Lower lobe of right lung (tissue), 2 donors: ENCODE measurements at regions of chr17 and their contacts with region 1.

Region 1: DNA sequence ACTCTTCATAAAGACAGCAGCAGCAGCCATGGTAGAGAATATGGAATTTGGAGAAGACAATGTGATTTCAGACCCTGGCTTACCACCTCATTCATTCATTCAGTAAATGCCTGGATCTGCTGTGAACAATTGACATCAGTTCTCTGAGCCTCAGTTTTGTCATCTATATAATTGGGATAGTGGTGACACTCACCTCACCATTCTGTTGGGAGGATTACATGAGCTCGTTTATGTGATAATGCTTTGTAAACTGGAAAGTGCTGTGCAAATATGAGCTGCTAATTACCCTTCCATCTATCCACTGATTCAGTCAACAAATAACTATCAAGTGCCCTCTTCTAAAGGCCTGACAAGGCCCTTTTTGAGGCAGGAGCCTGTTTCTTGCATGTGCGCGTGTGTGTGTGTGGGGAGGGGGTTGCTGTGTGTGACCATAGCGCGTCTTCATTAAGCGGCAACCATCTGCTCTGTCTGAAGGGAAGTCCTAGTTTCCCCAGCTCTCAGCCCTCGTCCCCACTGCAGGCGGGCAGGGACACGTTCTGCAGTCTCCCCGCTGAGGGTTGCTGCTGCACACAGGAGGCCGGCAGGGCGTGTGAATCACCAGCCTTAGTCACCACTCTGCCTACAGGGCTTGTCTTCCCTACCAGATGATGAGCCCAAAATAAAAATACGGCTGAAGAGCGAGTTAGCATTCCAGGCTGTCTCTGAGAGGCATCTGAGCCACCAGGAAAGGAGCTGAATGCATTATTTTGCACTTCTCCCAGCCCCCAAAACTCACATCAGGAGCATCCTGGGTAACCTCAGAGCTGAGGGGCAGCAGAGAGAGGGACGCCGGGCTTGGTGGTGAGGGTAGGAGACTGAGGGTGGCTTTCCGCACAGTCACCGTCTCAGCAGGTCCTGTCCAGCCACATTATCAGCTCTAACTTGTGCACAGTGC is 19.9 kb downstream of the ARL4D start:
- DNase-seq: no peak
- ATAC-seq: peak; percentile 33 to 50
- H3K4me3 ChIP-seq: no peak overlapping the region
- H3K27ac ChIP-seq: peak overlapping the region; percentile 62
- H3K4me1 ChIP-seq: peaks cover 28% of the 10 kb centered on the region
- H3K27me3 ChIP-seq: no peaks in the 10 kb centered on the region
- CTCF ChIP-seq: no peak

Region 2: DNA sequence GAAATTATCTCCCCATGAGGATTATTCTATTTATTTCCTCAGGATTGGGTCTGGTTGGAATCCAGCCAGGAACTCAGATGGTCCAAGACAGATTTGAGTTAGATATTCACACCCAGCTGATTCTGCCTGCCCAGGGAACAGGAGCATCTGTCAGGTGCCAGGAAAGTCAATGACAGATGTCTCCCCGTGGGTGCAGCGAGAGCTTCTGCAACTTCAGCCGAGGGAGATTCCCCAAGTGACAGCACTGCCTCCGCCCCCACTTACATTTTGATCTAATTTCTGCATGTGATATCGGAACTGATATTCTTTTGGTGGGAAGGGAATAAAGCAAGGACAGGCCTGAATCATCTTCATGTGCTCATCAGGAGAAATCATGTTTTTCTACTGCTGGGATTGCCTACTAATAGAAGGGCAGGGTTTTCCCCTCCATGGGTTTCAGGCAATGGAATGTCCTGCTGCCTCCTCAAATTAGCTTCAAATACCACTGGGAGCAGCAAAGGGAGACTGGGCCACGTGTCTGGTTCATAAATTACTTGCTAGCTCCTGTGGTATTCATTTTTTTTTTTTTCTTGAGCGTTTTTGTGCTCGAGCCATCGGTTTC is 49.4 kb after region 1 on chr17:
- intact Hi-C with region 1: loop called (anchors 10 kb)
- DNase-seq: no peak
- ATAC-seq: no peak
- H3K4me3 ChIP-seq: no peak overlapping the region
- H3K27ac ChIP-seq: peak overlapping the region; percentile 27
- H3K4me1 ChIP-seq: peaks cover 24% of the 10 kb centered on the region
- H3K27me3 ChIP-seq: no peaks in the 10 kb centered on the region
- CTCF ChIP-seq: no peak

Region 3: GRCh38 chr17:43713494-43714162 is 294.9 kb after region 1 on chr17:
- intact Hi-C with region 1: no loop called
- DNase-seq: no peak
- ATAC-seq: peak; percentile 57 to 79
- H3K4me3 ChIP-seq: peak overlapping the region; percentile 56
- H3K27ac ChIP-seq: peak overlapping the region; percentile 72
- H3K4me1 ChIP-seq: peaks cover 15% of the 10 kb centered on the region
- H3K27me3 ChIP-seq: peaks cover 22% of the 10 kb centered on the region
- CTCF ChIP-seq: no peak